Uterus (tissue), 4 donors: ENCODE measurements at regions of chr16 and their contacts with region 1.

Region 1: DNA sequence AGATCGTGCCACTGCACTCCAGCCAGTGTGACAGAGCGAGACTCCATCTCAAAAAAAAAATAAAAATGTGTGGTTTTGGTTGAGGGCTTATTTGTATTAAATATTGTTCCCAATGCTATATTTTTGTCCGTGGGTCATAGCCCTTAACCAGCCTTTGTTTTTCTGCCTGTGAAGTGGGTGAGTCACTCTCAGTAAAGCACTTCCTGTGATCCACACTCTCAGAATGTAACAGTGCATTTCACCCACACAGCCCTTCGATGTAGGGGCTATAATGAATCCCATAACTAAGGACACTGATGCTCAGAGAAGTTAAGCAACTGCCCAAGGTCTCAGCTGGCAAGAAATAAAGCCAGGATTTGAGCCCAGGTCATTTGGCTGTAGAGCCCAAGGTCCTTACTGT is 34.7 kb upstream of the POLR3E start:
- DNase-seq: no peak
- H3K4me3 ChIP-seq: no peak overlapping the region
- H3K27ac ChIP-seq: no peak overlapping the region
- H3K4me1 ChIP-seq: no peaks in the 10 kb centered on the region
- H3K27me3 ChIP-seq: no peaks in the 10 kb centered on the region
- CTCF ChIP-seq: no peak
- POLR2A ChIP-seq: no peak

Region 2: GRCh38 chr16:22126103-22126502 is 136.4 kb before region 1 on chr16:
- intact Hi-C with region 1: no loop called
- DNase-seq: no peak
- H3K4me3 ChIP-seq: no peak overlapping the region
- H3K27ac ChIP-seq: no peak overlapping the region
- H3K4me1 ChIP-seq: no peaks in the 10 kb centered on the region
- H3K27me3 ChIP-seq: no peaks in the 10 kb centered on the region
- CTCF ChIP-seq: no peak
- POLR2A ChIP-seq: no peak

Region 3: GRCh38 chr16:22360963-22361659 is 98.7 kb after region 1 on chr16:
- intact Hi-C with region 1: no loop called
- DNase-seq: no peak
- H3K4me3 ChIP-seq: no peak overlapping the region
- H3K27ac ChIP-seq: no peak overlapping the region
- H3K4me1 ChIP-seq: no peaks in the 10 kb centered on the region
- H3K27me3 ChIP-seq: no peaks in the 10 kb centered on the region
- CTCF ChIP-seq: no peak
- POLR2A ChIP-seq: no peak

Region 4: GRCh38 chr16:22417019-22417418 is 154.6 kb after region 1 on chr16:
- intact Hi-C with region 1: loop called (anchors 10 kb)
- DNase-seq: no peak
- H3K4me3 ChIP-seq: no peak overlapping the region
- H3K27ac ChIP-seq: no peak overlapping the region
- H3K4me1 ChIP-seq: no peaks in the 10 kb centered on the region
- H3K27me3 ChIP-seq: no peaks in the 10 kb centered on the region
- CTCF ChIP-seq: no peak
- POLR2A ChIP-seq: no peak